ENCODE measurements at regions of chr4 and their contacts with region 1.

Region 1: DNA sequence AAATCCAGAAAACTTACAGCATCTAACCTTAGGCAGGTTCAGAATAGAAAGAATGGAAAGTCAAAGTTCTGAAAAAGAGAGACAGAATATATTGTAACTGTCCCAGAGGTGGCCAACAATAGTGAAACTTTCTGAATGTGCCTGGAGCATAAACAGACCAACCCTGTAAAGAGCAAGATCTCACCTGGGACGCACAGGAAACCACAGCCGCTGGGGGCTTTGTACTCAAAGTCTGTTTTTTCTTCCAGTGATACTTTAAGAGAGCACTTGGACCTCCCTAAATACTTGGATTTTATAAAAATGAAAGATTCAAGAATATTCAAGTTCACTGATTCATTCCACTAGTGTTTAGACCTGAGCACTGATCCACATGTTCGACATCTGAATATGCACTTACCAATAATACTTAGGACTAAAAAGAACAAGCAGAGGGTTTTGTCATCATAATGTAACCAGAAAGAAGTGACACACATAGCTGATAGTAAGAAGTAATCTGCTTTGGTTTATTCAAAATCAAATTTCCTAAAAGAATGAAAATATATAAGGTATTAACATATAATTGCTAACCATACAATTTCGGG is 35.3 kb downstream of the ARAP2 start:
- DNase-seq: peak; percentile 54
- H3K4me3 Mint-ChIP-seq: no peak overlapping the region
- H3K27ac Mint-ChIP-seq: peak overlapping the region; percentile 73
- H3K4me1 Mint-ChIP-seq: peaks cover 52% of the 10 kb centered on the region
- H3K27me3 Mint-ChIP-seq: no peaks in the 10 kb centered on the region

Region 2: GRCh38 chr4:36099527-36099926 is 109.5 kb before region 1 on chr4:
- CTCF ChIA-PET with region 1: no interaction called
- POLR2A ChIA-PET with region 1: no interaction called
- intact Hi-C with region 1: no loop called
- DNase-seq: no peak
- H3K4me3 Mint-ChIP-seq: no peak overlapping the region
- H3K27ac Mint-ChIP-seq: no peak overlapping the region
- H3K4me1 Mint-ChIP-seq: no peaks in the 10 kb centered on the region
- H3K27me3 Mint-ChIP-seq: no peaks in the 10 kb centered on the region

Region 3: GRCh38 chr4:36187723-36188333 is 21.2 kb before region 1 on chr4:
- CTCF ChIA-PET with region 1: no interaction called
- POLR2A ChIA-PET with region 1: no interaction called
- intact Hi-C with region 1: loop called (anchors 2 kb)
- DNase-seq: no peak
- H3K4me3 Mint-ChIP-seq: no peak overlapping the region
- H3K27ac Mint-ChIP-seq: no peak overlapping the region
- H3K4me1 Mint-ChIP-seq: peaks cover 20% of the 10 kb centered on the region
- H3K27me3 Mint-ChIP-seq: no peaks in the 10 kb centered on the region

Region 4: DNA sequence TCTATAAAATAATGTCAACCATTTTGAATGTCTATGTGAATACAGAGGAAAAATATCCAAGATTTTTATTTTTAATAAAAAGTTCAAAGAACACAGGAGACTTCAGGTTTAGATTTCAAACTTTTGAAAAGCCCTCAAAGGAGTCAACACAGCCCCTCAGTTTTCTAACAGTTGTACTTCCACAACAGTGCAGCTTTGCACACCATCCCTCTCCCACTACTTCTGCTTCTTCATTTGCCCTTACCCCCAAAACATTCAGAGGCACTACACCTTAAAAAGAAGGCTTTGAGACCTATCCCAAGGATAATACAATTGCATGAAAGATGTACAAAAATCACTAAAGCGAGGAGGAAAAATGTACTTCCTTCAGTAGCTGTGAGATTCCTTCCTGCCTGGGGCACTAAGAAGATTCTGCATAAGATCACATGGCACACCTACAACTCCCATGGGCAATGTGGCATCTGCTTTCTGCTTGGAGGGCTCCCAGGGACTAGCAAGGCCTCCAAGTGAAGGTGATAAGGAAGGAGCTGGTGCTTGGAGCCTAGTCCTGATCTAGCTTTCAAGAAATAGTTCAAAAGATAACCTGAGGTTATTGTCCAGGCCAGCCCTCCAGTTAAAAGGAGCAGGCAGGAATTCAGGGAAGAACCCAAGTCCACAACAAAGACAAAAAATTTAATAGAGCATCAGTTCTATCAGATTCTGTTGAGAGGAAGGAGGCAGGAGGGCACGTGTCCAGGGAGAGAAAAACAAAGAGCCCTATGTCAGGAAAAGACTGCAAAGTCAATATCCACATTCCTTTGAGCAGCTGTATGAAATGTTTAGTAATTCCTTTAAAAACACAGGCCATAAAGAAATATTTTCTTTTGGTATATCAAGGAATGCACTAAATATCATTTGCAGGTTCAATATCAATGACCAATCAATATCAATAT is 16.3 kb after region 1 on chr4:
- CTCF ChIA-PET with region 1: interaction called, 4 read pairs
- POLR2A ChIA-PET with region 1: interaction called, 3 read pairs
- intact Hi-C with region 1: loop called (anchors 2 kb)
- DNase-seq: no peak
- H3K4me3 Mint-ChIP-seq: no peak overlapping the region
- H3K27ac Mint-ChIP-seq: no peak overlapping the region
- H3K4me1 Mint-ChIP-seq: peaks cover 67% of the 10 kb centered on the region
- H3K27me3 Mint-ChIP-seq: no peaks in the 10 kb centered on the region

Region 5: GRCh38 chr4:36255577-36255976 is 46.6 kb after region 1 on chr4:
- CTCF ChIA-PET with region 1: no interaction called
- POLR2A ChIA-PET with region 1: no interaction called
- intact Hi-C with region 1: loop called (anchors 1 kb)
- DNase-seq: peak; percentile 75
- H3K4me3 Mint-ChIP-seq: peak overlapping the region; percentile 65
- H3K27ac Mint-ChIP-seq: peak overlapping the region; percentile 95
- H3K4me1 Mint-ChIP-seq: peaks cover 44% of the 10 kb centered on the region
- H3K27me3 Mint-ChIP-seq: no peaks in the 10 kb centered on the region

Measured in activated CD4-positive, alpha-beta memory T cell treated with anti-CD3 and anti-CD28 coated beads for 36 hours (primary cell).